Posterior vena cava (tissue), 2 donors: ENCODE measurements at regions of chr6 and their contacts with region 1.

Region 1: DNA sequence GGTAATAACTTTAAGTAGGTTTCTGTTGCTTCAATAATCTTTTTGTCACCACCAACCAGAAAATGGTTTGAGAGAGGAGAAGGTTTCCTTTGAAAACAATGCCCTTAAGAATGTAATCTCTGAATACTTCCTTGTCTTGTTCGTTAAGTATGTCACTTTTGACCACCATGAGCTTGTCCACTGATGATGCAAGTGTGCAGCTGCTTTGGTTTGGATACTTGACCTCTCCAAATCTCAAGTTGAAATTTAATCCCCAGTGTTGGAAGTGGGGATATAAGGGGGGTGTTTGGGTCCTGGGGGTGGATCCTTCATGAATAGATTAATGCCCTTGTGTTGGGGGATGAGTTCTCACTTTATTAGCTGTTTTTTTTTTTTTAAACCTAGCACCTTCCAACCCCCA is 985.4 kb downstream of the EPHA7 start:
- DNase-seq: no peak

Region 2: DNA sequence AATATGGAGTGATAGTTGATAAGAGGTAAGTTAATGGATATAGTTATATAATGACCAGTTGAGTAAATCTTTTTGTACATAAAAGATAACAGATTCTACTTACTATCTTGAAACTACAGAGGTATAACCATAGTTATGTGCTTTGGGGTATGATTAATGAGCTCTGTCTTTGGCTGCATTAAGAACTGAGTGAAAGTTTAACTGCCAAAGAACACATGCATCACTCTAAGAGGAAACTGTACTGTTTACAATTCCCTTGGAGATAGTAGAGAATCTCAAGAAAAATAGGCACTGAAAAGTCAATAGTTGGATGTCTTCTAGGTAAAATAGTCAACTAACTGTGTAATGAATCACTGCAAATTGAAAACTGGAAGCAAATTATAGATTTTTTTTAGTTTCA is 144.1 kb before region 1 on chr6:
- intact Hi-C with region 1: loop called in 1 of 2 experiments (anchors 5 kb)
- DNase-seq: no peak

Region 3: DNA sequence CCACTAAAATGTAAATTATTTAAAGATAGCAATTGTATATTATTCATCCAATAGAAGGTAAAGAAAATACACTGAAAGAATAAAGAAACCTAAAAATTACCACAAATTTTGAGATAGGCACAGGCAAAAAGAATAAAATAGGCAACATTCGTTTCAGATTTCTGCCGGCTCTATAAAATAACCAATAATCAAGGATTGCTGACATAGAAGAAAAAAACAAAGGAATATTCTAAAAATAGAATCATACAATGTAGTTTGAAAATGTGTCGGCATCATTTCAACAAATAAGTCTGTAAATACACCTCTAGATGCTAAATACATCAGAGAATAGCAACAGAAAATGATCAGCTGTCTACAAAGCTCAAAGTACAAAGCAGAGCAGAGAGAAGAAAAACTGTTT is 12.1 kb after region 1 on chr6:
- intact Hi-C with region 1: no loop called
- DNase-seq: no peak